Tibial artery (tissue), 4 donors: ENCODE measurements at regions of chr10 and their contacts with region 1.

Region 1: GRCh38 chr10:97553575-97554031 is 19.0 kb upstream of the ANKRD2 start:
- DNase-seq: peak; percentile 74 to 82
- H3K4me3 ChIP-seq: no peak overlapping the region
- H3K27ac ChIP-seq: no peak overlapping the region
- H3K4me1 ChIP-seq: peaks cover 0 to 25% (median 7%) of the 10 kb centered on the region in 4 donors
- H3K27me3 ChIP-seq: no peaks in the 10 kb centered on the region
- CTCF ChIP-seq: peak; percentile 88

Region 2: DNA sequence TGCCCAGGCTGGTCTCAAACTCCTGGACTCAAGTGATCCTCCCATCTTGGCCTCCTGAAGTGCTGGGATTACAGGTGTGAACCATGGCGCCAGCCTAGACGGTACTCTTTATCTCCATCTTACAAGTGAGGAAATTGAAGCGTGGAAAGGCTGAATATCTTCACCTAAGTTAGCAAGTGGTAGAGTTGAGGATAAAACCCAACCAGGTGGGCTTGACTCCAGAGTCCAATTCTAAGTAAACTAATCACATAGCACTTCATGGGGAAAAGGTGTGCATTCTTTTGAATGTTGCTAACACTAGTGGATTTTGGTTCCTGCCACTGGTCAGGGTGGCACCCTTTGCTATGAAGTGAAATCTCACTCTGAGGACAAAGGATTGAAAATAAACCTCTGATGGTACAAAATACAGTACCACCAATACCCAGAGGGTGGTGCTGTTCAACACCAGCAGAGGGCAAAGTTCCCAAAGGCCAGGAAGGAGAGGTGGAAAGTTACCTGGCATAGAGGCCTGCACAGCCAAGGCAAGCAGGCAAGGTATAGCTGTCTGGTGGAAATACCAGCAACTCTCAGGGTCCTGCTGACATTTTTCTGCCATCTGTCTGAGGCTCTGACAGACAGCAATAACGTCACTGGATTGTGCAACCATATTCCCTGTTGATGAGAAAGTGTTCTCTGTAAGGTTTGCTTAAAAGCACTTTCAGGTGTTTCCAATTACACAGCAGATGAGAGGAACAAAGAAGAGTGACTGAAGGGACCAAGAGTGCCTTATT is 90.1 kb before region 1 on chr10:
- intact Hi-C with region 1: loop called (anchors 5 kb)
- DNase-seq: no peak
- H3K4me3 ChIP-seq: no peak overlapping the region
- H3K27ac ChIP-seq: peak overlapping the region; percentile 3 to 34
- H3K4me1 ChIP-seq: no peaks in the 10 kb centered on the region
- H3K27me3 ChIP-seq: no peaks in the 10 kb centered on the region
- CTCF ChIP-seq: peak; percentile 84 to 87

Region 3: DNA sequence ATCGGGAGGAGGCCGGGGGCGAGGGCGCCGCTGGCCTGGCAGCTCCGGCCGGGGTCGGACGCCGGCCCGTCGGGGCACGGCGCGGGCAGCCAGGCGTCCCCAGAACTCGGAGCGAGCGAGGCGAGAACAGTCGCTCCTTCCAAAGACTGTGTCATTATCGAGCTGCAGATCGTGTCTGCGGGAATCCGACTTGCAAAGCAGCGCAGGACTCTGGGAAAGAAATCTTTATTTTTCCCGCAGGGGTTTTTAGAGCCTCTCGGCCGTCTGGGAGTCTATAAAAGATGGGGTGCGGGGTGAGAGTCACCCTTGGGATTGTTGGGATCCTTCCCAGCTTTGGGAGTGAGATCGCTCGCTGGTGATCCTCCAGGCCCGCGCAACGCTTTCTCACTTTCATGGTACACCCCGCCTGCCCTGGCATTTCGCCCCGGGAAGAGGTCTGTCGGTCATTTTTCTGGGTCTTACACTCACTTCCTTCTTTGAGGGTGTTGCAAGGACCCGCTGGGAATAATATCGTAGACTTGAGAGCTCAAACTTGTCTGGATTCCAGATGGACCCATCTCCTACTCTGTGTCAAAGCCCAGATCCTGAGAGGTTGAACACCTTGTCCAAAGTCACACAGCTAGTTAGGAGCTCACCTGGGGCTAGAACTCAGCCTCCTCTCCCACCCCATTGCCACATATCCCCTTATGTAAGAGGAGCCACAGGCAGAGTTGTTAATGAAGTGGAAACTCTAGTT is 53.9 kb before region 1 on chr10:
- intact Hi-C with region 1: loop called (anchors 5 kb)
- DNase-seq: peak; percentile 82 to 88
- H3K4me3 ChIP-seq: peak overlapping the region; percentile 82 to 97
- H3K27ac ChIP-seq: peak overlapping the region; percentile 87 to 98
- H3K4me1 ChIP-seq: peaks cover 0 to 40% (median 22%) of the 10 kb centered on the region in 4 donors
- H3K27me3 ChIP-seq: no peaks in the 10 kb centered on the region
- CTCF ChIP-seq: no peak

Region 4: DNA sequence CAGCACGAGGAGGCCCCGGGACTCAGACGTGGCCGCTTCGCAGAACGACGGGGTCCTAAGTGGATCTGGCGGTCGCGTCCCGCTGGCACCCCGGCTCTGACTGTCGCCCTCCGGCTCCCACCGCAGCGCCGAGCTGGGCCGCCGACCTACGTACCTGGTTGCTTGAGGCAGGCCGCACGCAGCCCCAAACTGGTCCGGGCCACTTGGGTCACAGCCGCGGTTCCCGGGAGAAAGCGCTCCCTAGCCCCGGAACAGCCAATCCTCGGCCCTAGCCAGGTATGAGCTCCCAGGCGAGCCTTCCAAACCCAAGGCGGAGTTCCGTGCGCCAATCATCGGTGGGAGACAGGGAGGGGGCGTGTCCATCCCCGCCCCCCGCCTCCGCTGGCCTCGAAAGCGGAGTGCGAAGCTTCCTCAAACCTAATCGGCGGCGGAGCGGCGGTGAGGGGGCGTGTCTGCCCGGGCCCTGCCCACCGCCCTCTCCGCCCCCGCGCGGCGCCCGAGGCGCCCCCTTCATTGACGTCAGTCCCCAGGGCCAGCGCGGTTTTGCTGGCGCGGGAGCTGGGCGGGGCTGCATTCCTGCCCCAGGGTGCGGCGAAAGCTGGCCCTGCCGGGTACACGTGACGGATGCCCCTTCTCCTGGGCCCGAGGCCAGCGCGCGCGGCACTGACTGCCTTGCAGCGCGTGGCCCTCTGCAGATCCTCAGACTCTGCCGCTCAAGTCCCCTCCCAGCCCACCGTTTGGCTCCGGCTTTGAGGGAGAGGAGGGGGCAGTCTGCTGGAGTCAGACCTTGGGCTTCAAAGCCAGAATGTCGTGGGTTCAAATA is 133.6 kb after region 1 on chr10 and contains the start of gene AVPI1:
- intact Hi-C with region 1: no loop called
- DNase-seq: peak; percentile 96 to 99
- H3K4me3 ChIP-seq: peak within 1 kb of the TSS; percentile 77 to 84
- H3K27ac ChIP-seq: peak within 1 kb of the TSS; percentile 95 to 96
- H3K4me1 ChIP-seq: peaks cover 0 to 57% (median 46%) of the 10 kb centered on the region in 4 donors
- H3K27me3 ChIP-seq: no peaks in the 10 kb centered on the region
- CTCF ChIP-seq: peak in 1 of 2 experiments; percentile 11